ENCODE measurements at regions of chrX and their contacts with region 1.

Region 1: DNA sequence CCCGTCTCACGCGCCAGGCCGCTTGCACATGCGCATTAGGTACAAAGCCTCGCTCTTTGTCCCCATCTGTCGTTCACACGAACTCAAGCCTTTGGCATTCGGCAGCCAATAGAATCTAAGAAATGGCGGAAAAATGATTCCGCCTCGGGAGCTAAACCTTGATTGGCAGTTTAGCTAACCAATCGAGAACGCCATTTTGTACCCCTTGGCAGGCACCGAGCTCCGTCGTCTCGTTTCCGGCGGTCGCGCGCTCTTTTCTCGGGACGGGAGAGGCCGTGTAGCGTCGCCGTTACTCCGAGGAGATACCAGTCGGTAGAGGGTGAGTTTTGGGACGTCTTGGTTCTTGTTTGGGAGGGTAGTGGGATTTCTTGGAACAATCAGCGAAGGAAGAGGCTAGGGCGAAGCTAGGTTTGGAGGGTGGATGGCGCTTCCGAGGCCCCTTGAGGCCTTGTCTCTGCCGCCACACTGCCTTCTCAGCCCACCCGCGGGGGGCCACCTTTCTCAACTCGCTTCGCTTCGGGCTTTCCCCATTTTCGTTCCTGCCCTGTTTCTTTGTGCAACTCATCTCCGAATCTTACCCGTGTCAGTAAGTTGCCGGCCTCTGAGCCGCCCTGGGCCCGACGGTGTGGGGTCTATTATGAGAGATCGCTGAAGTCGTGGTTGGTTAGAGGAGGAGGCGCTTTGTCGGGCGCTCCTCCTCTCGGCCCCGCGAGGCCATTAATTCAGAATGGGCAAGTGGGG is at the start of gene NONO:
- DNase-seq: peak; percentile 86 to 95 (median 92)
- H3K4me3 ChIP-seq: peak within 1 kb of the TSS; percentile 62 to 63
- H3K4me3 Mint-ChIP-seq: peak within 1 kb of the TSS; percentile 96 to 100 (median 98)
- H3K27ac ChIP-seq: peak within 1 kb of the TSS; percentile 95
- H3K27ac Mint-ChIP-seq: peak within 1 kb of the TSS; percentile 97 to 100 (median 99)
- H3K4me1 ChIP-seq: peaks cover 34% of the 10 kb centered on the region
- H3K4me1 Mint-ChIP-seq: peaks cover 7 to 42% (median 13%) of the 10 kb centered on the region in 4 donors
- H3K27me3 ChIP-seq: no peaks in the 10 kb centered on the region
- H3K27me3 Mint-ChIP-seq: no peaks in the 10 kb centered on the region
- total RNA-seq, gene NONO: 300 to 314 TPM

Region 2: GRCh38 chrX:70960728-70961127 is 322.8 kb before region 1 on chrX:
- CTCF ChIA-PET with region 1: no interaction called
- POLR2A ChIA-PET with region 1: no interaction called
- intact Hi-C with region 1: no loop called
- DNase-seq: no peak
- H3K4me3 ChIP-seq: no peak overlapping the region
- H3K4me3 Mint-ChIP-seq: no peak overlapping the region
- H3K27ac ChIP-seq: no peak overlapping the region
- H3K27ac Mint-ChIP-seq: no peak overlapping the region
- H3K4me1 ChIP-seq: no peaks in the 10 kb centered on the region
- H3K4me1 Mint-ChIP-seq: no peaks in the 10 kb centered on the region
- H3K27me3 ChIP-seq: no peaks in the 10 kb centered on the region
- H3K27me3 Mint-ChIP-seq: peaks cover 5 to 7% of the 10 kb centered on the region in 2 donors

Region 3: GRCh38 chrX:71068049-71068763 is 215.4 kb before region 1 on chrX and contains the start of gene SNX12:
- CTCF ChIA-PET with region 1: no interaction called
- POLR2A ChIA-PET with region 1: interaction called, 4 read pairs
- intact Hi-C with region 1: loop called (anchors 1 kb)
- DNase-seq: peak; percentile 88 to 93 (median 91)
- H3K4me3 ChIP-seq: peak within 1 kb of the TSS; percentile 53 to 69
- H3K4me3 Mint-ChIP-seq: peak within 1 kb of the TSS; percentile 88 to 97 (median 93)
- H3K27ac ChIP-seq: peak within 1 kb of the TSS; percentile 84
- H3K27ac Mint-ChIP-seq: peak within 1 kb of the TSS; percentile 93 to 98 (median 97)
- H3K4me1 ChIP-seq: peaks cover 16% of the 10 kb centered on the region
- H3K4me1 Mint-ChIP-seq: peaks cover 2 to 33% (median 14%) of the 10 kb centered on the region in 4 donors
- H3K27me3 ChIP-seq: no peaks in the 10 kb centered on the region
- H3K27me3 Mint-ChIP-seq: no peaks in the 10 kb centered on the region
- total RNA-seq, gene SNX12: 36.7 to 36.9 TPM

Region 4: GRCh38 chrX:71198066-71198465 is 85.5 kb before region 1 on chrX:
- CTCF ChIA-PET with region 1: no interaction called
- POLR2A ChIA-PET with region 1: interaction called, 24 read pairs
- intact Hi-C with region 1: no loop called
- DNase-seq: peak in 2 of 5 donors; percentile 15 to 23
- H3K4me3 ChIP-seq: peak overlapping the region; percentile 29 to 60
- H3K4me3 Mint-ChIP-seq: peak overlapping the region; percentile 85 to 96 (median 90)
- H3K27ac ChIP-seq: peak overlapping the region; percentile 61
- H3K27ac Mint-ChIP-seq: peak overlapping the region; percentile 86 to 95 (median 89)
- H3K4me1 ChIP-seq: peaks cover 8% of the 10 kb centered on the region
- H3K4me1 Mint-ChIP-seq: peaks cover 11 to 34% (median 21%) of the 10 kb centered on the region in 4 donors
- H3K27me3 ChIP-seq: no peaks in the 10 kb centered on the region
- H3K27me3 Mint-ChIP-seq: no peaks in the 10 kb centered on the region